ENCODE measurements at regions of chr1 and their contacts with region 1.

Region 1: DNA sequence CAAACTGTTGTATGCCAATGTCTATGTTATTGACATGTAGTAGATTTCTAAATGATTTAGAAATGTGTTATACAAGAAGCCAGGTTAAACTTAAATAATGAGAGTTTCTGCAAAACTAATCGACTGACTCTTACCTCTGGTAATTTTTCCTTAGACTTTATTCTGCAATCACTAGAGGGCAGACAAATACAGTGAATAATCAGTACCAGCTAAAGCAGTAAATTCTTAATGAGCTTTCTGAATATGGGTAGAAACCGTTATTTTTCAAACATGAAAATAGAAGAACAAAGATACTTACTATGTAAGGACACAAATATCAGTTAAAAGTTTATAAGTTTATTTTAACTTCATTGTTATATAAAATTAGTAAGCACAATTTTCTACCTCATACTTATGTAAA is 97.9 kb upstream of the RGS1 start:
- DNase-seq: no peak
- ATAC-seq: no peak; the same call in 1 of the 2 replicates
- H3K4me3 ChIP-seq: no peak overlapping the region
- H3K27ac ChIP-seq: no peak overlapping the region
- H3K4me1 ChIP-seq: no peaks in the 10 kb centered on the region
- H3K27me3 ChIP-seq: no peaks in the 10 kb centered on the region; the same call in none of the 2 replicates
- CTCF ChIP-seq: peak; percentile 51; the same call in 1 of the 2 replicates

Region 2: DNA sequence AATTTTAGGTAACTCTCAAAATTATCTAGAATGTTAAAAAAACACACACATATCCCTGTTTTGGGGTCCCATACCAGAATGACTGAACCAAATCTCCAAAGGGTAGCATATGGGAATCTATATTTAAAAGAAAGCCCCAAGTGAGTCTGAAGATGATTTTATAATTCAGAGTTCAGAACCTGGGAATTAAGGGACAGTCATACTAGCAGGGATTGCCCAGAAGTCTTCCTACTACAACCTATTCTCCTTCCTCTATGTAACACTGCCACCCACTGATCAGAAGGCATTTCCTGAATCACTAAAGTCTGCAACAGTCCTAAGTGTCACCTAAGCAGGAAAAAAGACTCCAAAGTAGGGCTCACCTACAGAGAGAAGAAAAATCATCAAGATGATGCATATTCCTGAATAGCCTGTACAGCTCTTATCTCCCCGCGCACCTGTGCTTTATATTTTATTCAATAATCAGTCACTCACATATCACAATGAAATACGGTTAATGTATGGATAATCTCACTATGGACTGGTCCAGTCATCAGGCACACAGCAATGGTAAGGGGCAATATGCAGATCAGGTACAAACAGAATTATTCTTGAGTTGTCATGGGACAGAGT is 102.8 kb after region 1 on chr1:
- CTCF ChIA-PET with region 1: interaction called, 6 read pairs
- POLR2A ChIA-PET with region 1: no interaction called
- in situ Hi-C with region 1: no loop called
- intact Hi-C with region 1: loop called (anchors 1 kb)
- DNase-seq: peak; percentile 47
- ATAC-seq: peak; percentile 87
- H3K4me3 ChIP-seq: no peak overlapping the region
- H3K27ac ChIP-seq: no peak overlapping the region
- H3K4me1 ChIP-seq: no peaks in the 10 kb centered on the region
- H3K27me3 ChIP-seq: no peaks in the 10 kb centered on the region
- CTCF ChIP-seq: peak; percentile 53

Region 3: DNA sequence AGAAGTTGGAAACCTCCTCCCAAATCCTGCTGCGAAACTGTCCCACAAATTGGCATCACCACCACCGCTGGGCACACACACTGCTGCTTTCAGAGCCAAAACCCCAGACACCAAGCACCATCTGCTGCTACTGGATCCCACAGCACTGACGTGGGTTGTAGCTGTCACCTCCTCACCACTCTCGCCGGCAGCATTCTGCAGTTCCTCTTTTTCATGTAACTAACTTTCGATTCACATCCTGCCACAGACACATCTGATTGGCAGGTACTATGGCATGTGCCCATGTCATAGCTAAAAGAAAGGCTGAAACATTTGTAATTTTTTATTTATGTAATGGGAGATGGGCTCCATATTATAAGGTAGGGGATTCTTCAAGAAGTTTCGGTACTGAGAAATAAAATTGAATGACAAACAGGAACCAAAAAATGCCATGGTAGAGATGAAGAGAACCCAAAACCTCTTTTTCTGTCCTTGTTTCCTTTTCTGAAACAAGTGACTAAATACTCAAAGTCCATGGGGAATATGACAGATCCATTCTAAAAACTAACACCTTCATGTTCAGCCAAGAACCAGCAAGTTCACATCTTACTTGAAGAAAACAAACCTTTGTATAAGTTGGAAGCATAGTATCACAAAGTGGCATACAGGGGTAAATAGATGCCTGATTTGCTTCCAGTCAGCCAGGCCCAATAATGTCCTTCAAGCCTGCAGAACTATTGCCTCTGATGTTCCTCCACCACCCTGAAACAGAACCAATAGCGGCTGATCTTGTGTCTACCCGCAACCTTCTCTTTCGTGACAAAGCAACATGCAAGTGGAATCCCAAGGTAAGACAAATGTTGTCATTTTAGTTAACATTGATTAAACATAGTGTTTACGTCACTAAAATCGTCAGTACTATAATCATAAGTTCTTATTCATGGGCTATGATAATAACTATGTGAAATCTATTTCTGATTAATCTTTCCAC is 131.8 kb after region 1 on chr1:
- CTCF ChIA-PET with region 1: no interaction called
- POLR2A ChIA-PET with region 1: no interaction called
- in situ Hi-C with region 1: no loop called
- intact Hi-C with region 1: loop called (anchors 1 kb)
- DNase-seq: no peak
- ATAC-seq: no peak
- H3K4me3 ChIP-seq: no peak overlapping the region
- H3K27ac ChIP-seq: no peak overlapping the region
- H3K4me1 ChIP-seq: no peaks in the 10 kb centered on the region
- H3K27me3 ChIP-seq: no peaks in the 10 kb centered on the region
- CTCF ChIP-seq: no peak

Region 4: GRCh38 chr1:192732787-192733186 is 255.2 kb after region 1 on chr1:
- CTCF ChIA-PET with region 1: no interaction called
- POLR2A ChIA-PET with region 1: no interaction called
- in situ Hi-C with region 1: no loop called
- intact Hi-C with region 1: no loop called
- DNase-seq: no peak
- ATAC-seq: 0 out of 2 replicates have a peak, but pooled peaks have one; percentile 45
- H3K4me3 ChIP-seq: no peak overlapping the region
- H3K27ac ChIP-seq: no peak overlapping the region
- H3K4me1 ChIP-seq: no peaks in the 10 kb centered on the region
- H3K27me3 ChIP-seq: no peaks in the 10 kb centered on the region
- CTCF ChIP-seq: peak; percentile 28; the same call in 1 of the 2 replicates

Region 5: DNA sequence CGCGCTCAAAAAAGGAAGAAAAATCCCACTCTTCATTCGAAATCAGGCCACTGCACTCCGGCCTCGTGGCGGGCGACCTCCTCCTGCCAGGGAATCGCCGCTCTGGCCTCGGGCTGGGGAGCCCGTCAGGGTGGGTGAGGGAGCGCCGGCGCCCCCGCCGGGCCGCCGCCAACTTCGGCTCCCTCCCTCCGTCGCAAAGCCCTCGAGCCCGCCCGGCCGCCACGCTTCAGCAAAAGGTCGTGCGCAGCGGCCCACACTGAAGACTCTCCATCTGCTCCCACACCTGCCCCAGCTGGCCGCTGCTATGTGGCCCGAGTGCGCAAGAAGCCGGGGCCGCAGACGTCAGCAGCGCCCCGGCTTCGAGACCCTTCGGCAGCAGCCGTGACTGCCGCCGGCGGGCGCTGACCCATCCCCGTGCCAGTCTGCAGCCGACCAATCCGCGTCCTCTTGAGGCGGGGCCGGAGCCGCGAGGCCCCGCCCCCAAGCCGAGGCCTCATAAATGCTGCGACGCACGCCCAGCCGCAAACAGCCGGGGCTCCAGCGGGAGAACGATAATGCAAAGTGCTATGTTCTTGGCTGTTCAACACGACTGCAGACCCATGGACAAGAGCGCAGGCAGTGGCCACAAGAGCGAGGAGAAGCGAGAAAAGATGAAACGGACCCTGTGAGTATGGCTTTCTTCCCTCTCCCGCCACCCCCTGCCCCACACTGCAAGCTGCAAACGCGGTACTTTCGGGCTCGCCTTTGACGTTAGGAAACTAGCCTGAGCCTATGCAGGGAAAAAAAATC is 331.1 kb after region 1 on chr1 and contains the start of gene RGS2:
- CTCF ChIA-PET with region 1: interaction called, 3 read pairs
- POLR2A ChIA-PET with region 1: no interaction called
- in situ Hi-C with region 1: no loop called
- intact Hi-C with region 1: loop called (anchors 5 kb)
- DNase-seq: peak; percentile 56
- ATAC-seq: peak; percentile 98
- H3K4me3 ChIP-seq: peak within 1 kb of the TSS; percentile 76 to 83
- H3K27ac ChIP-seq: peak within 1 kb of the TSS; percentile 42; the same call in 1 of the 2 replicates
- H3K4me1 ChIP-seq: peaks cover 17% of the 10 kb centered on the region
- H3K27me3 ChIP-seq: no peaks in the 10 kb centered on the region
- CTCF ChIP-seq: peak; percentile 9; the same call in 1 of the 2 replicates
- total RNA-seq, gene RGS2: 4.5 TPM

Region 6: GRCh38 chr1:193019442-193020026 is 541.9 kb after region 1 on chr1:
- CTCF ChIA-PET with region 1: interaction called, 6 read pairs
- POLR2A ChIA-PET with region 1: no interaction called
- in situ Hi-C with region 1: no loop called
- intact Hi-C with region 1: loop called (anchors 2 kb)
- DNase-seq: peak; percentile 17
- ATAC-seq: peak; percentile 75; the same call in 1 of the 2 replicates
- H3K4me3 ChIP-seq: no peak overlapping the region
- H3K27ac ChIP-seq: no peak overlapping the region
- H3K4me1 ChIP-seq: no peaks in the 10 kb centered on the region
- H3K27me3 ChIP-seq: no peaks in the 10 kb centered on the region
- CTCF ChIP-seq: peak; percentile 52; the same call in 1 of the 2 replicates